Aorta (tissue), 5 donors: ENCODE measurements at regions of chr7 and their contacts with region 1.

Region 1: GRCh38 chr7:48035301-48035966 is at the start of gene C7orf57:
- DNase-seq: peak; percentile 96 to 98
- ATAC-seq: peak; percentile 97
- H3K4me3 ChIP-seq: peak within 1 kb of the TSS; percentile 17 to 72
- H3K27ac ChIP-seq: no peak within 1 kb of the TSS
- H3K4me1 ChIP-seq: no peaks in the 10 kb centered on the region
- H3K27me3 ChIP-seq: no peaks in the 10 kb centered on the region
- total RNA-seq, gene C7orf57: not detected

Region 2: GRCh38 chr7:48088559-48089045 is 53.2 kb after region 1 on chr7:
- intact Hi-C with region 1: loop called (anchors 5 kb)
- DNase-seq: peak; percentile 95 to 96
- ATAC-seq: peak; percentile 87
- H3K4me3 ChIP-seq: peak overlapping the region; percentile 16 to 57
- H3K27ac ChIP-seq: peak overlapping the region; percentile 39 to 78
- H3K4me1 ChIP-seq: peaks cover 0 to 2% of the 10 kb centered on the region in 2 donors
- H3K27me3 ChIP-seq: no peaks in the 10 kb centered on the region

Region 3: GRCh38 chr7:48109848-48110663 is 74.6 kb after region 1 on chr7:
- intact Hi-C with region 1: loop called in 1 of 2 experiments (anchors 5 kb)
- DNase-seq: peak; percentile 75 to 90
- ATAC-seq: peak; percentile 87
- H3K4me3 ChIP-seq: no peak overlapping the region
- H3K27ac ChIP-seq: no peak overlapping the region
- H3K4me1 ChIP-seq: no peaks in the 10 kb centered on the region
- H3K27me3 ChIP-seq: no peaks in the 10 kb centered on the region